MCF 10A (cell line): ENCODE measurements at regions of chr1 and their contacts with region 1.

Region 1: DNA sequence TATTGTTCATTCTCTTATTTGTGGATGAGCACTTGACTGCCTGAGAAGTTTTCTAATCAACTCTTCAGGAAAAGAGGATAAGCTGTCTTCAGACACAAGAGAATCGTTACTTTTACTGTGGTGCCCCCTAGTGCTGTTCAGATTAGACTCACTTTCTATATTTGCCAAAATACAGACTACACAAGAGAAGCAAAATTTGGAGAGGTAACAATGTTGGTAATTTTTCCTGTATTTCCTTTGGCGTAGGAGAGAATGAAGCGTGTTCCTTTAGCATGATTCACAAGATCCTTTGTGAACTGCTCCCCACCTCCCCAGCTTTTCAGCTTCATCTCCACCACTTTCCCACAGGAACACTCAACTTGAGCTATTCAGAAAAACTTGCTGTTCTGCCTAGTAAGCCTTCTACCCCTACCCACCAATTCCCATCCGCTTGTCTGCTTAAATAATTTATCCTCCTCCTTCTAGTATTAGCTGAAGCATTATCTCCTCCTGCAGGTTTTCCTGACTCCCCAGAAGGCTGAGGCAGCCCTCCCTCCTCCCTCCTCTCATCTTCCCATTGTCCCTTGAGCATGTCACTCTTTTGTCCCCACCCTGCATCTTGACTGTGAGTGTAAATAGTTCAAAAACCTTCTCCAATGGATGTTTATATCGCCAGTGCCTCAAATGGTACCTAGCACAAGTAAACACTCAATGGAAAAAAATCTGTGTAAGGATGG is 4.5 kb downstream of the TNFSF4 start:
- DNase-seq: peak; percentile 83
- H3K4me3 Mint-ChIP-seq: no peak overlapping the region
- H3K27ac Mint-ChIP-seq: no peak overlapping the region
- H3K4me1 Mint-ChIP-seq: peaks cover 25% of the 10 kb centered on the region
- H3K27me3 Mint-ChIP-seq: no peaks in the 10 kb centered on the region
- CTCF ChIP-seq: peak; percentile 92

Region 2: DNA sequence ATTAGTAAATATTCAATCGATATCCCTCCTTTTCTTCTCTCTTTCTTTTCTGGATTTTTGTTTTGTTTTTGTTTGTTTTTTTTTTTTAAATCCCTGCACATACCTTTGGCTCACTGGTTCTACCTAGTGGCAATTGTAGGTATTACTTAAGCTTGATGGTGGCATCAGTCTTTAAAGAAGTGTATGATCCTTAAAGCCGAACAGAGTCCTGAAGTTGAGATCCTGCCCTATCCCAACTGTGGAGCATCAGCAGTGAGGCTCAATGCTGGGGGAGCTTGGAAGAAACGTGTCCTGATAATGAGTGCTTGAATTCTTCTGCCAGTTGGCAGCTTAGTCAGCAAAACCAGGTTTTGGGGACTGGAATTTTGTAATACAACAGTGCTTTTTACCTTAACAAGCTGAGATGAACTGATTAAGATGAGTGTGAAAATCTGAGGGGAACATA is 482.9 kb before region 1 on chr1:
- CTCF ChIA-PET with region 1: interaction called, 15 read pairs
- POLR2A ChIA-PET with region 1: no interaction called
- intact Hi-C with region 1: no loop called
- DNase-seq: peak; percentile 75
- H3K4me3 Mint-ChIP-seq: peak overlapping the region; percentile 3
- H3K27ac Mint-ChIP-seq: no peak overlapping the region
- H3K4me1 Mint-ChIP-seq: peaks cover 35% of the 10 kb centered on the region
- H3K27me3 Mint-ChIP-seq: no peaks in the 10 kb centered on the region
- CTCF ChIP-seq: peak; percentile 94

Region 3: DNA sequence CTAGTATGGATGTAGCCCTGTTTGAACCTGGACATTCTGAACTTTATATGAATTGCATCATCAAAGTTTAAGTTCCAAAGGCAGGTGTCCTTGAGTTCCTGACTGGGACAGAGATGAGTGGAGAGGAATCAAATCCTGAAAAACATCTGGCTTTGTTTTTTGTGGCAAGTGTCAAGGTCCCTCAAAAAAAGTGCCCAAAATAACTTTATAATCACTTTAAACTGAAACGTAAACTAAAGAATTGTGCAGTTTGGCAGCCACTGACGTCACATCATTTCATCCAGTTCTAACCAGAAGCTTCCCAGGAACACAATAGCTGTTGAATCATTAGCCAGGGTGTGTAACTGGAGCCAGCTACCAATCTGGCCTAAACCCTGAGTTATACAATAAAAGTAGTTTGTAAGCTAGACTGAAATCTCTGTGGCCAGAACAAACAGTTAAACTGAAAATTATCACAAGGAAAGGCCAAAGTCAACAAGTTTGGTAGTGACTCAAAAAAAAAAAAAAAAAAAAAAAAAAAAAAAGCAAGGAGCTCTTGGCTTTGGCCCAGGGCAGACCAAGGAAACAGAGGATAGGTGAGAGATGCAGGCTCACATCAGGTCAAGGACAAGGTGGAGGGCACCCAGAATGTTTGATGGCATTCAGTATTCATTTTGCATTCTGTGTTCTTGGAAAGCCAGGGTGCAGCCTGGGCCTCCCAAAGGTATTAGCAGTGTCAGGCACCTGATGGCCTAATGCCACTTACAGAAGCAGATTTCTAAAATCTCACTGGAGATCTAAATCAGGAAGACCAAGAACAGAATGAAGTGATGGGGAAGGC is 226.2 kb before region 1 on chr1:
- CTCF ChIA-PET with region 1: interaction called, 11 read pairs
- POLR2A ChIA-PET with region 1: interaction called, 4 read pairs
- intact Hi-C with region 1: loop called (anchors 10 kb)
- DNase-seq: peak; percentile 98
- H3K4me3 Mint-ChIP-seq: no peak overlapping the region
- H3K27ac Mint-ChIP-seq: peak overlapping the region; percentile 88
- H3K4me1 Mint-ChIP-seq: peaks cover 47% of the 10 kb centered on the region
- H3K27me3 Mint-ChIP-seq: no peaks in the 10 kb centered on the region
- CTCF ChIP-seq: no peak

Region 4: GRCh38 chr1:173122958-173123852 is 79.4 kb before region 1 on chr1:
- CTCF ChIA-PET with region 1: interaction called, 3 read pairs
- POLR2A ChIA-PET with region 1: interaction called, 3 read pairs
- intact Hi-C with region 1: loop called (anchors 1 kb)
- DNase-seq: peak; percentile 98
- H3K4me3 Mint-ChIP-seq: peak overlapping the region; percentile 72
- H3K27ac Mint-ChIP-seq: peak overlapping the region; percentile 98
- H3K4me1 Mint-ChIP-seq: peaks cover 24% of the 10 kb centered on the region
- H3K27me3 Mint-ChIP-seq: no peaks in the 10 kb centered on the region
- CTCF ChIP-seq: no peak

Region 5: DNA sequence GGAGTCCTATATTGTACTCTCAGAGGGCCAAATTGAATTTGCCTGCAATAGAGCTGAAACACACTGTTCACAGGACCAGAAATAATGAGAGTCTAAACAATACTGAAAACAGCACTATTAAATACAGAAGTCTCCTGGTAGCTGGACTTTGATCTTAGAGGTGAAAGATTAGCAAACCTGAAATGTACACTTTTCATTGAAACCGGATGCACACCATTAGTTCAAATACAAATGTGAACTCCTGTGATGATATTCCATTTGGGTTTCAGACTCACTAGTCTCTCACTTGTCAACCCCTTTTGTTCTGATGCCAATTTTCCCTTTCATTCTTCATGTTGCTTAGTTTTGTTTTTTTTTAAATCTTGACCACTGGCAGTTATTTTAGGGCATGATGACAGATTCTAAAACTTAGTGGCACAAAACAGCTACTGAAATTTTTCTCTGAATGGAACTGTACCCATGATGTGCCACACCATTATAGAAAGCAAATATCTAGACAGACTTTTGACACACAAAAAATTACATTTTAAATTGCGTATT is 10.4 kb after region 1 on chr1:
- CTCF ChIA-PET with region 1: interaction called, 36 read pairs
- POLR2A ChIA-PET with region 1: interaction called, 3 read pairs
- intact Hi-C with region 1: no loop called
- DNase-seq: no peak
- H3K4me3 Mint-ChIP-seq: no peak overlapping the region
- H3K27ac Mint-ChIP-seq: no peak overlapping the region
- H3K4me1 Mint-ChIP-seq: no peaks in the 10 kb centered on the region
- H3K27me3 Mint-ChIP-seq: no peaks in the 10 kb centered on the region
- CTCF ChIP-seq: no peak

Region 6: DNA sequence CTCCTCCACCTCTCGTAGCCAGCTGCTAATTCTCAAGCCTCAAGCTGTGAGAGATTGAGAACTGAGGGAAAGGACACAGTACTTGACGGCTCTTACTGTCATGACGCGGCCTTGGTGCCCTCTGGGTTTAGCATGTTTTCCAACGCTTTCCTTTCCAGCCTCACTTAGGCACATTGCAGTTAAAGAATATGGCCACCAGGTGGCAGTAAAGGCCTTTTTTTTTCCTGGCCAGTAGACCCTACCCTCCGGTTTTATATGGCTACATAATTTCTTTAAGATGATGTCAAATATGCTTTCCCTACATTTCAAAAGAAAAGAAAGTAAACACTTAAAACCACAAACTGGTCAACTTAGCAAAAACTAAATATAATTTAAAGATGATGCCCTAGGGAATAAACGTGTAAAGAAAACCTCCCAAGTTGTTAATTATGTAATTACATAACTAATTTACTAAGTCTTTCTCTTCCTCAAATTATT is 217.8 kb after region 1 on chr1:
- CTCF ChIA-PET with region 1: interaction called, 19 read pairs
- POLR2A ChIA-PET with region 1: no interaction called
- intact Hi-C with region 1: no loop called
- DNase-seq: peak; percentile 91
- H3K4me3 Mint-ChIP-seq: no peak overlapping the region
- H3K27ac Mint-ChIP-seq: peak overlapping the region; percentile 9
- H3K4me1 Mint-ChIP-seq: peaks cover 22% of the 10 kb centered on the region
- H3K27me3 Mint-ChIP-seq: no peaks in the 10 kb centered on the region
- CTCF ChIP-seq: peak; percentile 94